MCF 10A (cell line): ENCODE measurements at regions of chr10 and their contacts with region 1.

Region 1: GRCh38 chr10:118459726-118460193 is 117.6 kb upstream of the FAM204A start:
- DNase-seq: peak; percentile 77
- H3K4me3 Mint-ChIP-seq: peak overlapping the region; percentile 41
- H3K27ac Mint-ChIP-seq: no peak overlapping the region
- H3K4me1 Mint-ChIP-seq: no peaks in the 10 kb centered on the region
- H3K27me3 Mint-ChIP-seq: peaks cover 9% of the 10 kb centered on the region
- CTCF ChIP-seq: peak; percentile 55

Region 2: GRCh38 chr10:117431160-117431559 is 1028.6 kb before region 1 on chr10:
- CTCF ChIA-PET with region 1: interaction called, 11 read pairs
- POLR2A ChIA-PET with region 1: no interaction called
- intact Hi-C with region 1: loop called (anchors 10 kb)
- DNase-seq: peak; percentile 73
- H3K4me3 Mint-ChIP-seq: no peak overlapping the region
- H3K27ac Mint-ChIP-seq: no peak overlapping the region
- H3K4me1 Mint-ChIP-seq: no peaks in the 10 kb centered on the region
- H3K27me3 Mint-ChIP-seq: no peaks in the 10 kb centered on the region
- CTCF ChIP-seq: peak; percentile 36

Region 3: DNA sequence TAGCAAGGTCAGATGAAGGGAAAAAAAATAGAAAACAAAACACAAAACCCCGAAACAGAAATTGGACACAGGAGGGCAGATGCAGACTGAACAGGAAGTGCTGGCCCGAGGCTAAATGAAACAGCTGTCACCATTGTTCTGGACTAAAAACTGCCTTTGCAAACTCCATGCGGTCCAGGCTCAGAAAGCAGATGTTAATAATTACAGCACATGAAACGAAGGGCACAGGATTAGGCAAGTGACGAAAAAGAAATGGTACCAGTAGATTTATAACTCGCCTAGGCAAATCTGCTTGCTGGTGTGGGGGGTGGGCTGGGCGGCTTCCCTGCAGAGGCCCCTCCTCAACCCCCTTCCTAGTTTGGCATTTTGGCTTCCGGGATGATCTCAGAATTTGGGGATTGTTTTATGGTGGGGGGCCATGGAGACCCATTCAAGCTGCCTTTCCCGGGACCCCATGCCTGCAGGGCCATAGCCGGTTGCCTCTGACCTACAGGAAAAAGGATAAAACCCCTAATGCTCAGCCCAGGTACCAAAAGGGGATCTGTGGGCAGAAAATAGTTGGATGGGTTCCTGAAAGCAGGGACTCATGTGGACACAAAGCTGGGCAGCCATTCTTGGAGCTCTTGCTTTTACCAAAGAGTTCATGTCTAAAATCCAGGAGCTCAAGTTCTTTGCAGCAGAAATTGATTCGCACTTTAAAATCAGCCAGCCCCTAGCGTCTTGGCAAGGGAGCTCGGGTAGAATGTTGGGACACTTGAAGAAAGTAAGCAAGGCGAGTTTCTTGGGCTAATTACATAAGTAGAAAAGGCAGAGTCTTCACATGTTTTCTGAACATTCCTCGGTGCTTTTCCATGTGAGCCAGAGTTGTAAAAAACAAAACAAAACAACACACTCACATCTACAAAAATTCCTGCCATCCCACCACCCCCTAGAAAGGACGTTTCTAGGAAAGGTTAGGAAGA is 956.2 kb before region 1 on chr10:
- CTCF ChIA-PET with region 1: interaction called, 61 read pairs
- POLR2A ChIA-PET with region 1: no interaction called
- intact Hi-C with region 1: no loop called
- DNase-seq: peak; percentile 23
- H3K4me3 Mint-ChIP-seq: no peak overlapping the region
- H3K27ac Mint-ChIP-seq: no peak overlapping the region
- H3K4me1 Mint-ChIP-seq: no peaks in the 10 kb centered on the region
- H3K27me3 Mint-ChIP-seq: no peaks in the 10 kb centered on the region
- CTCF ChIP-seq: no peak

Region 4: DNA sequence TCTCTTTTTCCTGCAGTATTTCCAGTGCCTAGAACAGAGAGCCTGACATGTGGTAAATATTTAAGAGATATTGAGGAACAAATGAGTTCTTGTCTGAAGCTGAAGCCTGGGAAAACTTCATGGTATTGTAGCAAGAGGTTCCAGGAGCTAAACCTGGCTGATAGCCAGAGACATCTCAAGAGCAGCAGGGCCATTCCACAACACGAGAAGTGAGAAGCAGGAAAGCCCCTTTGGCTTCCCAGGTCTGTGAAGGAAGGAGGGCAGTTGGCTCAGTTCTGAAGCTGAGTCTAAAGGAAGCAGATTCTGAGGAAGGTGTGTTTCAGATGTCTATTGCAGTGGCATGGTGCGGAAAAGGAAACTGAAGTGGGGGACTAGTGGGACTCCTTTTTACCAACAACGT is 53.8 kb before region 1 on chr10:
- CTCF ChIA-PET with region 1: no interaction called
- POLR2A ChIA-PET with region 1: no interaction called
- intact Hi-C with region 1: no loop called
- DNase-seq: peak; percentile 14
- H3K4me3 Mint-ChIP-seq: no peak overlapping the region
- H3K27ac Mint-ChIP-seq: no peak overlapping the region
- H3K4me1 Mint-ChIP-seq: peaks cover 11% of the 10 kb centered on the region
- H3K27me3 Mint-ChIP-seq: peaks cover 22% of the 10 kb centered on the region
- CTCF ChIP-seq: no peak

Region 5: DNA sequence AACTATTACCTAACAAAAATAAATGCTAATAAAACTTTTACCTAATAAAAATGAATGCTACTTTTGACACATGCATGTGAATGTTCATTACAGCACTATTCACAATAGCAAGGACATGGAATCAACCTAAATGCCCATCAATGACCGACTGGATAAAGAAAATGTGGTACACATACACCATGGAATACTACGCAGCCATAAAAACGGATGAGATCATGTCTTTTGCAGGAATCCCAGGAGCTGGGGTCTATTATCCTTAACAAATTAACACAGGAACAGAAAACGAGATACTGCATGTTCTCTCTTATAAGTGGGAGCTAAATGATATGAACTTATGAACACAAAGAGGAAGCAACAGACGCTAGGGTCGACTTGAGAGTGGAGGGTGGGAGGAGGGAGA is 29.6 kb before region 1 on chr10:
- CTCF ChIA-PET with region 1: interaction called, 15 read pairs
- POLR2A ChIA-PET with region 1: interaction called, 7 read pairs
- intact Hi-C with region 1: no loop called
- DNase-seq: no peak
- H3K4me3 Mint-ChIP-seq: no peak overlapping the region
- H3K27ac Mint-ChIP-seq: no peak overlapping the region
- H3K4me1 Mint-ChIP-seq: no peaks in the 10 kb centered on the region
- H3K27me3 Mint-ChIP-seq: no peaks in the 10 kb centered on the region
- CTCF ChIP-seq: no peak

Region 6: GRCh38 chr10:118447478-118448270 is 12.1 kb before region 1 on chr10:
- CTCF ChIA-PET with region 1: interaction called, 32 read pairs
- POLR2A ChIA-PET with region 1: interaction called, 3 read pairs
- intact Hi-C with region 1: no loop called
- DNase-seq: peak; percentile 35
- H3K4me3 Mint-ChIP-seq: no peak overlapping the region
- H3K27ac Mint-ChIP-seq: no peak overlapping the region
- H3K4me1 Mint-ChIP-seq: no peaks in the 10 kb centered on the region
- H3K27me3 Mint-ChIP-seq: peaks cover 12% of the 10 kb centered on the region
- CTCF ChIP-seq: no peak

Region 7: GRCh38 chr10:118495499-118495898 is 35.7 kb after region 1 on chr10:
- CTCF ChIA-PET with region 1: interaction called, 15 read pairs
- POLR2A ChIA-PET with region 1: no interaction called
- intact Hi-C with region 1: no loop called
- DNase-seq: no peak
- H3K4me3 Mint-ChIP-seq: no peak overlapping the region
- H3K27ac Mint-ChIP-seq: no peak overlapping the region
- H3K4me1 Mint-ChIP-seq: peaks cover 5% of the 10 kb centered on the region
- H3K27me3 Mint-ChIP-seq: no peaks in the 10 kb centered on the region
- CTCF ChIP-seq: no peak

Region 8: DNA sequence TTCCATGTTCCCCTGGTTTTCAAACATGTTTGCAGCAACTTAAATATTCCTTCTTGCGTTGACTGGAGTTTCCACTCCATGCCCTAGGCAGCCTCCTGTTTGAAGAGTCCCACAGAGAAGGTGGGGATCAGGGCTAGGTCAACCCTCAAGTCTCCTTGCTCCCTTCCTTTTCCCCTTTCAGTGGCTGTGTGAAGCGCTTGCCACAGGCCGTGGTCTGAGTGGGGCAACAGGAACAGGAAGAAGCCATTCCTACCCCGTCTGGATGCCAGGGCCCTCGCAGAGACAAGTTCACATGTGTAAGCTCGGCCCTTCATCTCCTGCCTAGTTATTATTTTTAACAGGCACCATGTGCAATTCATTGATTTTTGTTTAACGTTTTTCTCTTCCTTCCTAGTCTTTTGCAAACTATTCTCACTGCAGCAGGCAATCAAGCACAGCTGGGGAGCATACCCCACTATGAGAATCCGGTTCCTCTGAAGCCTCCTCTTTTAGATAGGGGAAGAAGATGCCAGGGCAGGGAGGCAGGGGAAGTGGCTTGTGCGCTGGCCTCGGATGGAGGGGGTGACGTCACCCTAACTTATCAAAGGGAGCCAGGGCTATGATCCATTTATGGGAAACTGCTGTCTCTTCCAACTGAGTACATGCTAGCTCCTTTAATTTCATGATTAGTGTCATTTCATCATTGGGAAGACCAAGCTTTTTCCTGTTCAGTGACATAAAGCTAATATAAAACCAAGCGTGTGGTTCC is 71.5 kb after region 1 on chr10:
- CTCF ChIA-PET with region 1: interaction called, 16 read pairs
- POLR2A ChIA-PET with region 1: no interaction called
- intact Hi-C with region 1: no loop called
- DNase-seq: no peak
- H3K4me3 Mint-ChIP-seq: no peak overlapping the region
- H3K27ac Mint-ChIP-seq: no peak overlapping the region
- H3K4me1 Mint-ChIP-seq: peaks cover 6% of the 10 kb centered on the region
- H3K27me3 Mint-ChIP-seq: no peaks in the 10 kb centered on the region
- CTCF ChIP-seq: no peak